CD4-positive, alpha-beta T cell (primary cell): ENCODE measurements at regions of chr1 and their contacts with region 1.

Region 1: DNA sequence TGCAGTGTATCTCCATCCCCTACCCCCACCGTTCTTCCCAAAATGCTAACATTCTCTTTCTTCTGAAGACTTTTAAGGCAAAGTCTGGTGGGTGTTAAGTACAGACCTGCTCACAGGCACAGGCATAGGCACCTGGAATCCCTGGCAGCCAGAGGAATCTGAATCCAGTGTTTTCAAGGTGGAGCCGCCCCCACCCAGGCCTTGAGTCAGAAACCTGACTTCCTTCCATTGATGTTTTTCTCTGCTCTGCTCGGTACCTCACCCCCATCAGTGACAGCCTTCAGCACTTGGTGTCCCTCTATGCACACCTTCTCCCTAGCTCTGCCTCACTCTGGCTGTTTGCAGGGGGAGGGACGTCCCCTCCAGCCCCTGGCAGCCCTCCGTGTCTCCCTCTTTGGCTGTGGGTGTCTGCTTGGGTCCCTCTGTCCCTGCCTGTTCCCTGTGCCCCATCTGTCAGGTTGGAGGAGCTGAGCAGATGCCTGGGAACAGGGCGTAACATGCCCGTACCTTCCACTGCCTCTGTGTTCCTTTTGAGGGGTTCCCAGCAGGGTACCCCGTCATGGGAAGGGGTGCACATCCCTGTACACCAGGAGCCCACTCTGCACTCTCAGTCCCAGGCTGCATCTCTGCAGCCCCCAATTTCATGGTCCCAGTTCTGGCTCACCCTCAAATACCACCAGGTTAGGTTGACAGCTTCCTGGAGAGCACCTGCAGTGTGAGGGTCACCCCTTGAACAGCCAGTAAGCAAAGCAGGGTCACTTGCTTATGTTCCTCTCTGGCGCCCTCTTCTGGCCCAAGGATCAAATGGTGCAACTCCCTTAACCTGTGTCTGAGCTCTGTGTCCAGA is 6.7 kb downstream of the NCDN start:
- DNase-seq: peak; percentile 67 to 89 (median 78)
- ATAC-seq: peak; percentile 72
- H3K4me3 ChIP-seq: no peak overlapping the region
- H3K4me3 Mint-ChIP-seq: peak overlapping the region; percentile 50
- H3K27ac ChIP-seq: no peak overlapping the region
- H3K27ac Mint-ChIP-seq: peak overlapping the region; percentile 62
- H3K4me1 ChIP-seq: peaks cover 30% of the 10 kb centered on the region
- H3K4me1 Mint-ChIP-seq: peaks cover 32% of the 10 kb centered on the region
- H3K27me3 ChIP-seq: no peaks in the 10 kb centered on the region
- H3K27me3 Mint-ChIP-seq: no peaks in the 10 kb centered on the region
- CTCF ChIP-seq: peak; percentile 80

Region 2: GRCh38 chr1:35202048-35202719 is 362.1 kb before region 1 on chr1:
- CTCF ChIA-PET with region 1: no interaction called
- POLR2A ChIA-PET with region 1: no interaction called
- intact Hi-C with region 1: loop called (anchors 5 kb)
- DNase-seq: peak; percentile 49 to 87 (median 62)
- ATAC-seq: peak; percentile 100
- H3K4me3 ChIP-seq: no peak overlapping the region
- H3K4me3 Mint-ChIP-seq: no peak overlapping the region
- H3K27ac ChIP-seq: no peak overlapping the region
- H3K27ac Mint-ChIP-seq: no peak overlapping the region
- H3K4me1 ChIP-seq: no peaks in the 10 kb centered on the region
- H3K4me1 Mint-ChIP-seq: peaks cover 9% of the 10 kb centered on the region
- H3K27me3 ChIP-seq: no peaks in the 10 kb centered on the region
- H3K27me3 Mint-ChIP-seq: no peaks in the 10 kb centered on the region
- CTCF ChIP-seq: peak; percentile 88

Region 3: GRCh38 chr1:35544978-35545377 is 19.3 kb before region 1 on chr1:
- CTCF ChIA-PET with region 1: interaction called, 11 read pairs
- POLR2A ChIA-PET with region 1: no interaction called
- intact Hi-C with region 1: no loop called
- DNase-seq: peak in 13 of 14 experiments; percentile 30 to 85 (median 54)
- ATAC-seq: peak; percentile 81
- H3K4me3 ChIP-seq: no peak overlapping the region
- H3K4me3 Mint-ChIP-seq: no peak overlapping the region
- H3K27ac ChIP-seq: no peak overlapping the region
- H3K27ac Mint-ChIP-seq: peak overlapping the region; percentile 8
- H3K4me1 ChIP-seq: peaks cover 26% of the 10 kb centered on the region
- H3K4me1 Mint-ChIP-seq: peaks cover 67% of the 10 kb centered on the region
- H3K27me3 ChIP-seq: no peaks in the 10 kb centered on the region
- H3K27me3 Mint-ChIP-seq: no peaks in the 10 kb centered on the region
- CTCF ChIP-seq: peak; percentile 63

Region 4: GRCh38 chr1:35641233-35641866 is 77.1 kb after region 1 on chr1 and contains the start of gene PSMB2:
- CTCF ChIA-PET with region 1: interaction called, 3 read pairs
- POLR2A ChIA-PET with region 1: interaction called, 8 read pairs
- intact Hi-C with region 1: loop called in 1 of 2 experiments (anchors 2 kb)
- DNase-seq: peak; percentile 92 to 98 (median 96)
- ATAC-seq: peak; percentile 89
- H3K4me3 ChIP-seq: peak within 1 kb of the TSS; percentile 83
- H3K4me3 Mint-ChIP-seq: peak within 1 kb of the TSS; percentile 99
- H3K27ac ChIP-seq: peak within 1 kb of the TSS; percentile 63 to 73
- H3K27ac Mint-ChIP-seq: peak within 1 kb of the TSS; percentile 98
- H3K4me1 ChIP-seq: peaks cover 15% of the 10 kb centered on the region
- H3K4me1 Mint-ChIP-seq: peaks cover 47% of the 10 kb centered on the region
- H3K27me3 ChIP-seq: peaks cover 0 to 16% of the 10 kb centered on the region in 2 experiments
- H3K27me3 Mint-ChIP-seq: peaks cover 35% of the 10 kb centered on the region
- CTCF ChIP-seq: no peak
- total RNA-seq, gene PSMB2: 34.0 to 35.3 TPM

Region 5: GRCh38 chr1:35715568-35716002 is 151.3 kb after region 1 on chr1:
- CTCF ChIA-PET with region 1: interaction called, 13 read pairs
- POLR2A ChIA-PET with region 1: interaction called, 7 read pairs
- intact Hi-C with region 1: no loop called
- DNase-seq: peak; percentile 66 to 87 (median 72)
- ATAC-seq: peak; percentile 72
- H3K4me3 ChIP-seq: no peak overlapping the region
- H3K4me3 Mint-ChIP-seq: peak overlapping the region; percentile 70
- H3K27ac ChIP-seq: no peak overlapping the region
- H3K27ac Mint-ChIP-seq: no peak overlapping the region
- H3K4me1 ChIP-seq: peaks cover 38% of the 10 kb centered on the region
- H3K4me1 Mint-ChIP-seq: peaks cover 33% of the 10 kb centered on the region
- H3K27me3 ChIP-seq: no peaks in the 10 kb centered on the region
- H3K27me3 Mint-ChIP-seq: no peaks in the 10 kb centered on the region
- CTCF ChIP-seq: peak; percentile 92

Region 6: GRCh38 chr1:35726450-35727433 is 162.5 kb after region 1 on chr1:
- CTCF ChIA-PET with region 1: interaction called, 23 read pairs
- POLR2A ChIA-PET with region 1: interaction called, 6 read pairs
- intact Hi-C with region 1: loop called (anchors 1 kb)
- DNase-seq: peak; percentile 20 to 81 (median 37)
- ATAC-seq: peak; percentile 92
- H3K4me3 ChIP-seq: no peak overlapping the region
- H3K4me3 Mint-ChIP-seq: no peak overlapping the region
- H3K27ac ChIP-seq: no peak overlapping the region
- H3K27ac Mint-ChIP-seq: no peak overlapping the region
- H3K4me1 ChIP-seq: peaks cover 7% of the 10 kb centered on the region
- H3K4me1 Mint-ChIP-seq: peaks cover 7% of the 10 kb centered on the region
- H3K27me3 ChIP-seq: no peaks in the 10 kb centered on the region
- H3K27me3 Mint-ChIP-seq: no peaks in the 10 kb centered on the region
- CTCF ChIP-seq: peak; percentile 83

Region 7: DNA sequence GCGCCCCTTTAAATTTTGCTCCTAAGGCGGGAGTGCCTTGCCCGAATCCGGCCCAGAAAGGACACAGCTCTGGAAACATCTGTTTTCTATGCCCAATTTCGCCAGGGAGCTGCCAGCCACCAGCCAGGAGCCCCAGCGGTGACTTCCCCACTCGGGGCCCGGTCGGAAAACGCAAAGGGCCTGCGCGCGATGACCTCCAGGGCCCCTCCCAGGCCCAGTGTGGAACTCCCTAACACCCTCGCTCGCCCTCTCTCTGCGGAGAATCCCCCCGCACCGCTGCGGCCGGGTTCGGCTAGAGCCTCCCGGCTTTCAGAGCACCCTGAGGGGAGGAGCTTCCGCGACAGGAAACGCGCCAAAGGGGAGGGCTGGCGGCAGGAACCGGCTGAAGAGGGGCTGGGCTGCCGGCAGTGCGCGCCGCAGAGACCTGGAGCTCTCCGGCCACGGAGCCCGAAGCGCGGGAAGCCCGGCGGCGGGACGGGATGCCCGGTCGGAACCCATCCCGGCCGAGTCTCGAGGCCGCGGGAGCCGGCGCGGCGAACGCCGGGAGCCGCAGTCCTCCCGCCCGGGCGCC is 205.0 kb after region 1 on chr1:
- CTCF ChIA-PET with region 1: interaction called, 10 read pairs
- POLR2A ChIA-PET with region 1: interaction called, 8 read pairs
- intact Hi-C with region 1: loop called (anchors 1 kb)
- DNase-seq: peak; percentile 60 to 92 (median 75)
- ATAC-seq: peak; percentile 79
- H3K4me3 ChIP-seq: peak overlapping the region; percentile 85
- H3K4me3 Mint-ChIP-seq: peak overlapping the region; percentile 97
- H3K27ac ChIP-seq: peak overlapping the region; percentile 68 to 78
- H3K27ac Mint-ChIP-seq: peak overlapping the region; percentile 72
- H3K4me1 ChIP-seq: peaks cover 13% of the 10 kb centered on the region
- H3K4me1 Mint-ChIP-seq: peaks cover 13% of the 10 kb centered on the region
- H3K27me3 ChIP-seq: no peaks in the 10 kb centered on the region
- H3K27me3 Mint-ChIP-seq: no peaks in the 10 kb centered on the region
- CTCF ChIP-seq: no peak